Breast epithelium (tissue), 4 donors: ENCODE measurements at regions of chr6 and their contacts with region 1.

Region 1: GRCh38 chr6:28923318-28924102 is at the start of gene TRIM27:
- DNase-seq: peak; percentile 81 to 95
- H3K4me3 ChIP-seq: peak within 1 kb of the TSS; percentile 78 to 97 (median 96)
- H3K27ac ChIP-seq: peak within 1 kb of the TSS; percentile 92 to 95
- H3K4me1 ChIP-seq: no peaks in the 10 kb centered on the region
- H3K27me3 ChIP-seq: no peaks in the 10 kb centered on the region
- CTCF ChIP-seq: peak in 1 of 3 donors; percentile 12
- POLR2A ChIP-seq: peak; percentile 87
- total RNA-seq, gene TRIM27: 38.7 to 106 (median 80.3) TPM

Region 2: DNA sequence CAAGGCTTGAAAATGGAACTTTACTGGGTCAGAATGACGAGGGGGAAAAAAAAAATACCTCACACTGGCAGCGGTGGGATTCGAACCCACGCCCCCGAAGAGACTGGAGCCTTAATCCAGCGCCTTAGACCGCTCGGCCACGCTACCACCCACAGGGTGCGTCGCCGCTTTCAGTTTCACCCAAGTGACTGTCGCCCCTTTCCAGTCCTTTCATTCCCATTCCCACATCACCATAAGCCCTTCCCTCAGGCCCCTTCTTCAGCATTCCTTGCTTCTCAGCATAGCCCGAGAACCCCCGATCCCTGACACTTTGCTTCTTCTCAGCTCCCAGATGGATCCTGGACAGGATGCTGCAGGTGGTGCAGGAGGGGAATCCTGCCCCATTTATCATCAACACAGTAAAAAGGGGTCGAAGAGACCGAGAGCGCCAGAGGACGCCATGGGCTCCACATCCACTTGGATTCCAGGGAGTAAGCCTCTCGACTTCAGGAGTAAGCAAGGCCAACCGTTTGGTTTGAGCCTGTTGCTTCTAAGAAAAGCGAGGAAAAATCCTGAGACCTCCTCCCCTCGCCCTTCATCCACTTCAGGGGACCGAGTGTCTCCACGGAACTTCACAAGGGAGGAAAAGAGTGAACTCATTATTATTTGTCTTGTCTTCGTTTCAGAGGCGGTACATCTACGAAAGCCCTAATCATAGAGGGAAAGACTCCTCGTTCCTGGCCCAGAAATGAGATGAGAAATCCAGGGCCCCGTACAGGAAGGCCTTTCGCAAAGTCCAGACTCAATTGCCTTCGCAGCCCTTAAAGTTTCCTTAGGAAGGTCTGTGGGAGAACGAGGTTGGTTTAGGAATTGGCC is 20.3 kb after region 1 on chr6:
- intact Hi-C with region 1: no loop called
- DNase-seq: peak; percentile 58 to 76
- H3K4me3 ChIP-seq: peak overlapping the region; percentile 43 to 65 (median 56)
- H3K27ac ChIP-seq: peak overlapping the region; percentile 78 to 83
- H3K4me1 ChIP-seq: peaks cover 0 to 7% of the 10 kb centered on the region in 2 donors
- H3K27me3 ChIP-seq: no peaks in the 10 kb centered on the region
- CTCF ChIP-seq: no peak
- POLR2A ChIP-seq: no peak

Region 3: GRCh38 chr6:29589423-29590048 is 666.0 kb after region 1 on chr6:
- intact Hi-C with region 1: loop called (anchors 10 kb)
- DNase-seq: peak in 1 of 2 donors; percentile 37
- H3K4me3 ChIP-seq: no peak overlapping the region
- H3K27ac ChIP-seq: no peak overlapping the region
- H3K4me1 ChIP-seq: no peaks in the 10 kb centered on the region
- H3K27me3 ChIP-seq: peaks cover 0 to 5% of the 10 kb centered on the region in 2 donors
- CTCF ChIP-seq: peak; percentile 93 to 99 (median 94)
- POLR2A ChIP-seq: no peak